Endothelial cell of umbilical vein (primary cell): ENCODE measurements at regions of chr5 and their contacts with region 1.

Region 1: GRCh38 chr5:122182491-122182921 is 53.2 kb downstream of the ZNF474 start:
- DNase-seq: peak; percentile 93
- H3K4me3 ChIP-seq: peak overlapping the region in 1 of 3 experiments; percentile 57
- H3K27ac ChIP-seq: peak overlapping the region; percentile 84
- H3K4me1 ChIP-seq: peaks cover 41% of the 10 kb centered on the region
- H3K27me3 ChIP-seq: no peaks in the 10 kb centered on the region
- CTCF ChIP-seq: no peak
- POLR2A ChIP-seq: no peak

Region 2: DNA sequence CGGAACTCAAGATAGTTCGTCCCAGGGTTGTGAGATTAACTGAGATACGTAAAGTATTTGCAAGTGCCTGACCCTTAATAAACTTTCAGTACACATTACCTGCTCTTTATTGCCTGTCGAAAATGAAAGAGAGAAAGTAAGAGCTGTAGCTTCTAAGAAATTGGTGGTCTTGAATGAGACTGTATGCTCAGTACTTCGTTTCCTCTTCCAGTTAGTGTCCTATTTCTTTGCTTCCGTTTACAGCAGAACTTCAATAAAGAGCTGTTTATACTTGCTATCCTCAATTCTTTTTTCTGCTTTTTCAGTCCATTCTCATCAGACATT is 220.2 kb before region 1 on chr5:
- CTCF ChIA-PET with region 1: no interaction called
- POLR2A ChIA-PET with region 1: no interaction called
- dilution Hi-C with region 1: no loop called
- intact Hi-C with region 1: loop called (anchors 1 kb)
- DNase-seq: peak; percentile 42
- H3K4me3 ChIP-seq: peak overlapping the region; percentile 79 to 95 (median 88)
- H3K27ac ChIP-seq: peak overlapping the region; percentile 86
- H3K4me1 ChIP-seq: peaks cover 14% of the 10 kb centered on the region
- H3K27me3 ChIP-seq: peaks cover 4 to 5% of the 10 kb centered on the region in 2 experiments
- CTCF ChIP-seq: no peak
- POLR2A ChIP-seq: no peak

Region 3: DNA sequence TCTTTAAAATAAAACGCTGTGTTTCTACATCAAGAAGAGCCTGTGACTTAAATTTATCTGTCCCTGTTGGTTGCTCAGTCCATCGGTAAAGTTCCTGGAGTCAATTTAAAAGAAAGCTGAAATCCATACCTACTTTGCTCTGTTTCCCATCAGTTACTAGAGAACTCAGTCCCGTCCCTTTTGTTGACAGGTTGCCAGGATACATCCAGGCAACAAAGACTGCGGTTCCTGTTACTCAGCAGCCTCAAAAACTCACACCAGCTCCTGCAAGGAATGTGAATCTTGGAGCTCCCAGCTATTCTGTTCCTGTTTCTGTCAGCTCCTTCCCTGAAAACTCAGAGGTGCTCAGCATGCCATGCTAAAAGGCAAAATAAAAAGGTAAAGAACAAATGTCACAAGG is 53.2 kb before region 1 on chr5 and contains the start of gene ZNF474:
- CTCF ChIA-PET with region 1: no interaction called
- POLR2A ChIA-PET with region 1: no interaction called
- dilution Hi-C with region 1: no loop called
- intact Hi-C with region 1: loop called (anchors 2 kb)
- DNase-seq: peak; percentile 91
- H3K4me3 ChIP-seq: no peak within 1 kb of the TSS
- H3K27ac ChIP-seq: no peak within 1 kb of the TSS
- H3K4me1 ChIP-seq: no peaks in the 10 kb centered on the region
- H3K27me3 ChIP-seq: no peaks in the 10 kb centered on the region
- CTCF ChIP-seq: no peak
- POLR2A ChIP-seq: no peak
- total RNA-seq, gene ZNF474: 0.16 TPM in 1 of 2 replicates, not detected in the other

Region 4: DNA sequence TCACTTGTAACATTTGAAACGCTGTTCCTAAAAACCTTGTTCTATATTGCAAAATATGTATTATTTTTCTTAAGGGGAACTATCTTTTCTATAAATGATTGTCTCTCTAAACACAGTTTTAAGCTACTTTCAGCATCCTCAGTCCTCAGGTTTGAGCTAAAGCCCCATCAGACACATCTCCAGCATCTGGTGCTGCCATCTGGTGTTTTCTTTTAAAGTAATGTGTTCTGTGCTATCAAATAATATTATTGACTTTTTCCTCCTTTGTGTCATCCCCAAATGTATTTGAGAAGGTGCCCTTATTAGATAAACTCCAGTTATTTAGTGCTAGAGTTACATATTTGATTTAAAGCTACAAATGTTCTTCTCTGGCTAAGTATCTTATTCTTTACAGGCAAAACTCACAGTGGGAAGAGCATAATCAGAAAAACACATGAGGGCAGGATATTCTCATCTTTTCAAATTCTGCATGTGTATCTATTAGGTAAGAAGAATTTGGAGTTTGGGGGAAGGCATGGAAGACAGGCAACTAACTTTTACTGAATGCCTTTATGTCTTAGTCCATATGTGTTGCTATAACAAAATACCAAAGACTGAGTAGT is 25.7 kb before region 1 on chr5:
- CTCF ChIA-PET with region 1: interaction called, 16 read pairs
- POLR2A ChIA-PET with region 1: no interaction called
- dilution Hi-C with region 1: no loop called
- intact Hi-C with region 1: no loop called
- DNase-seq: peak; percentile 42
- H3K4me3 ChIP-seq: no peak overlapping the region
- H3K27ac ChIP-seq: no peak overlapping the region
- H3K4me1 ChIP-seq: peaks cover 8% of the 10 kb centered on the region
- H3K27me3 ChIP-seq: no peaks in the 10 kb centered on the region
- CTCF ChIP-seq: peak in 1 of 2 donors; percentile 19
- POLR2A ChIP-seq: no peak

Region 5: GRCh38 chr5:122311961-122312590 is 129.6 kb after region 1 on chr5 and contains the start of gene SNCAIP:
- CTCF ChIA-PET with region 1: no interaction called
- POLR2A ChIA-PET with region 1: no interaction called
- dilution Hi-C with region 1: no loop called
- intact Hi-C with region 1: loop called (anchors 2 kb)
- DNase-seq: peak; percentile 58
- H3K4me3 ChIP-seq: peak within 1 kb of the TSS; percentile 59 to 89 (median 81)
- H3K27ac ChIP-seq: peak within 1 kb of the TSS; percentile 62
- H3K4me1 ChIP-seq: peaks cover 25% of the 10 kb centered on the region
- H3K27me3 ChIP-seq: no peaks in the 10 kb centered on the region
- CTCF ChIP-seq: no peak
- POLR2A ChIP-seq: no peak
- total RNA-seq, gene SNCAIP: 35.9 and 42.0 TPM in 2 replicates

Region 6: GRCh38 chr5:122845229-122846050 is 662.9 kb after region 1 on chr5 and contains the start of gene SNX24:
- CTCF ChIA-PET with region 1: no interaction called
- POLR2A ChIA-PET with region 1: no interaction called
- dilution Hi-C with region 1: no loop called
- intact Hi-C with region 1: loop called (anchors 10 kb)
- DNase-seq: peak; percentile 71
- H3K4me3 ChIP-seq: peak within 1 kb of the TSS; percentile 76 to 95 (median 93)
- H3K27ac ChIP-seq: peak within 1 kb of the TSS; percentile 0
- H3K4me1 ChIP-seq: peaks cover 18% of the 10 kb centered on the region
- H3K27me3 ChIP-seq: no peaks in the 10 kb centered on the region
- CTCF ChIP-seq: no peak
- POLR2A ChIP-seq: peak; percentile 73
- total RNA-seq, gene SNX24: 8.8 and 14.9 TPM in 2 replicates